ENCODE measurements at regions of chr11 and their contacts with region 1.

Region 1: GRCh38 chr11:102614485-102614884 is 10.6 kb downstream of the MMP20 start:
- DNase-seq: no peak
- ATAC-seq: no peak
- H3K4me3 Mint-ChIP-seq: no peak overlapping the region
- H3K27ac Mint-ChIP-seq: no peak overlapping the region
- H3K4me1 Mint-ChIP-seq: peaks cover 9% of the 10 kb centered on the region
- H3K27me3 Mint-ChIP-seq: no peaks in the 10 kb centered on the region

Region 2: DNA sequence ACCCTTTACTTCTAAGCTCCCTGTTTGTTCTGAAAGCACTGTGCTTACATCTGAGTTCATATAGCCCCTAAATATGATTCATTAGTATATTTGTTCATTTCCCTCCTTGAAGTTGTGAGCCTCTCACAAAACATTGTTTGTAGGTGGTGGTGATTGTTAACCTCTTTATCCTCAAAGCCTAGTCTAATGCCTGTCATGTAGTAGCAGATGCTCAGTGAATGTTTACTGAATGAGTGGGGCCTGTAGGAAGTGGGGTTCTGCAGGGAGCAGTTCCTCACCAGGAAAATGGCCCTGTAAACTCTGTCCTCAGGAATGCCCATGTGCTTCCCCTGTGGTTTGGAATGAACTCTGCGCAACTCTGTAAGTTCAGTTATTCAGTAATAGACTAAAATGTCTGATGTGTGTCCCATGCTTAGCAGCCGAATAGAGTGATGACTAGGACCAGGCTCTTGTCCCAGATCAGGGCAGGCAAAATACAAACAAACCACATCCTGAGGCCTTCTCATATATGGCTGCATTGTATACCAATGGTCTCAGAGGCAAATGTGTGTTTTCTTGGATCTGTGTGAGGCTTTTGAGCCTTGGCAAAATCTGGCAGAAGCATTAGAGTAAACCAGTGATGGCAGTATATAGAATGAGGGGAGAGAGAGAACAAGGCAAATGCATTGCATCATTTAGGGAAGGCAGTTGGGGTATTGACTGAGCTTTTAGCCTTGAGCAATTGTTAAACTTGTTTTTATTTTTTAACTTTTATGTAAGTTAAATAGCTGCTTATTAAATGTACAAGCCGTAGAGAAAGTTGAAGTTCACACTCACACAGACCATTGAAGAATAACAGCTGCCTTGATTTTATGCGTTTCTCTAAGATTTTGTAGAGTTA is 388.6 kb before region 1 on chr11:
- CTCF ChIA-PET with region 1: no interaction called
- POLR2A ChIA-PET with region 1: no interaction called
- DNase-seq: no peak
- ATAC-seq: no peak
- H3K4me3 Mint-ChIP-seq: no peak overlapping the region
- H3K27ac Mint-ChIP-seq: no peak overlapping the region
- H3K4me1 Mint-ChIP-seq: no peaks in the 10 kb centered on the region
- H3K27me3 Mint-ChIP-seq: peaks cover 5% of the 10 kb centered on the region

Region 3: GRCh38 chr11:102293873-102294601 is 320.4 kb before region 1 on chr11:
- CTCF ChIA-PET with region 1: interaction called, 41 read pairs
- POLR2A ChIA-PET with region 1: no interaction called
- DNase-seq: peak; percentile 51
- ATAC-seq: peak; percentile 91
- H3K4me3 Mint-ChIP-seq: peak overlapping the region; percentile 73
- H3K27ac Mint-ChIP-seq: peak overlapping the region; percentile 88
- H3K4me1 Mint-ChIP-seq: peaks cover 25% of the 10 kb centered on the region
- H3K27me3 Mint-ChIP-seq: no peaks in the 10 kb centered on the region

Region 4: GRCh38 chr11:102367364-102367763 is 247.1 kb before region 1 on chr11:
- CTCF ChIA-PET with region 1: interaction called, 59 read pairs
- POLR2A ChIA-PET with region 1: no interaction called
- DNase-seq: no peak
- ATAC-seq: peak; percentile 64
- H3K4me3 Mint-ChIP-seq: no peak overlapping the region
- H3K27ac Mint-ChIP-seq: peak overlapping the region; percentile 37
- H3K4me1 Mint-ChIP-seq: peaks cover 29% of the 10 kb centered on the region
- H3K27me3 Mint-ChIP-seq: no peaks in the 10 kb centered on the region

Region 5: DNA sequence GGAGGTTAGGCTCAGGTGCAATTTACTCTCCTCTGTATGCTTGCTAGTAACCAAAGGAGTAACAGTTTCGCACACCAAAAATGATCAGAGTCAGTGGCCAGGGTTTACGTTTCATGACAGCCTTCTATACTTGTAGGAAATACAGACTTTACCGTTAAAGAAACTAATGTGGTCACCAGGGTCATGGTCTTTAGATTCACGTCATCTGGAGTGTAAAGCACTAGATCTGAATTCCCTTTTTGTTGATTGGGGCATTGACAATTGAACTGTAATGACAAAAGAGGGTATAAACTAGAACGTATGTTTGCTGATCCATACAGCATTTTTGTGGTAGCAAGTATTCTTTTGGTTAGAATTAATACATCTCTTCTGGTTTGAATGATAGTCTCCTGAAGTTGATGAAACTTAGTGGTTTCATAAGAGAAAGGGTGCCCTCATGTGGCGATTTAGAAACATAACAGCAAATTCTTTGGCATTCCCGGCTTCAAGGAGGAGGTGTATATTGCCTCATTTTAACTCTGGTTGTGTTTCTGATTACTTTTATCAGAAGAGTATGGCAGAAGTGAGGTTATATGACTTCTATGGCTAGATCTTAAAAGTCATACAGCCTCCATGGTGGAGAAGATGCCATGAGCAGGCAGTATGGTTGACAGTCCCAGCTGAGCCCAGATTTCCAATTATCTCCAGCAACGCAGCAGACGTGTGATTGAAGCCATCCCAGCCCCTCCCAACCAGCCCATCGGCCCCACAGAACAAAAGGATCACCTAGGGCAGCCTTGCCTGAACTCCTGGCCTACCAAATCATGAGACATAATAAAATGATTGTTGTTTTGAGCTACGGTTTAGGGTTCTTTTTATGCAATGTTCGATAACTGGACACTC is 119.1 kb before region 1 on chr11:
- CTCF ChIA-PET with region 1: interaction called, 49 read pairs
- POLR2A ChIA-PET with region 1: interaction called, 3 read pairs
- DNase-seq: peak; percentile 68
- ATAC-seq: peak; percentile 78
- H3K4me3 Mint-ChIP-seq: no peak overlapping the region
- H3K27ac Mint-ChIP-seq: peak overlapping the region; percentile 9
- H3K4me1 Mint-ChIP-seq: peaks cover 27% of the 10 kb centered on the region
- H3K27me3 Mint-ChIP-seq: peaks cover 14% of the 10 kb centered on the region

Region 6: DNA sequence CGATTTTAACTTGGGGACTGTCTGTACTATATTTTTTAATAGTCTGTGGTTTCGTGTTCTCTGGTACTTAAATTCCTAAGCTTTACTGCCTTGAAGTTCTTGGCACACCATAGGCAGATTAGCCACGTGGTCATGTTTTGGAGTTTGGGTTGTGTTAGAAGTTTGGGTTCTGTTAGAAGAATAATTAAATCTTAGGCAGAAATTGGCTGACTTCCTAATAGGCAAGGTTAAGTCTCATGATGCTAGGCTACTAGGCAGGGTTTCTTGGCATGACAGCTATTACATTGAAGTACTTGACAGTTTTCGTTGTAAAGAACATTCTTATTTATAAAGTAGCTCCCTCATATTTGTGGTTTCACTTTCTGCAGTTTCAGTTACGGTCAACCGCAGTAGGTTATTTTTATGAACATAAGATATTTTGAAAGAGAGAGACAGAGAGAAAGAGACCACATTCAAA is 53.9 kb before region 1 on chr11:
- CTCF ChIA-PET with region 1: interaction called, 21 read pairs
- POLR2A ChIA-PET with region 1: no interaction called
- DNase-seq: peak; percentile 55
- ATAC-seq: peak; percentile 66
- H3K4me3 Mint-ChIP-seq: peak overlapping the region; percentile 58
- H3K27ac Mint-ChIP-seq: peak overlapping the region; percentile 87
- H3K4me1 Mint-ChIP-seq: peaks cover 50% of the 10 kb centered on the region
- H3K27me3 Mint-ChIP-seq: no peaks in the 10 kb centered on the region

Region 7: DNA sequence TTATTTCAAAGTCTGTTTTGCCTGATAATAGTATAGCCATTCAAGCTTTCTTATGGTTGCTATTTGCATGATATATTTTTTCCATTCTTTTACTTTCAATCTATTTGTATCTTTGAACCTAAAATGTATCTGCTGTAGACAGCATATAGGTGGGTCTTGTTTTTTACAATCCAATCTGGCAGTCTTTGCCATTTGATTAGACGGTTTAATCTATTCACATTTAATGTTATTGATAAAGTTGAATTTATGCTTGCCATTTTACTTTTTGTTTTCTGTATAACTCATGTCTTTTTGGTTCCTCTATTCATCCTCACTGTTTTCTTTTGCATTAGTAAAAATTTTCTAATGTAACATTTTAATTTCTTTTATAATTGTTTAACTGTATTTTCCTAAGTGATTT is 26.8 kb before region 1 on chr11:
- CTCF ChIA-PET with region 1: no interaction called
- POLR2A ChIA-PET with region 1: no interaction called
- DNase-seq: no peak
- ATAC-seq: no peak
- H3K4me3 Mint-ChIP-seq: no peak overlapping the region
- H3K27ac Mint-ChIP-seq: no peak overlapping the region
- H3K4me1 Mint-ChIP-seq: peaks cover 3% of the 10 kb centered on the region
- H3K27me3 Mint-ChIP-seq: peaks cover 3% of the 10 kb centered on the region

Region 8: DNA sequence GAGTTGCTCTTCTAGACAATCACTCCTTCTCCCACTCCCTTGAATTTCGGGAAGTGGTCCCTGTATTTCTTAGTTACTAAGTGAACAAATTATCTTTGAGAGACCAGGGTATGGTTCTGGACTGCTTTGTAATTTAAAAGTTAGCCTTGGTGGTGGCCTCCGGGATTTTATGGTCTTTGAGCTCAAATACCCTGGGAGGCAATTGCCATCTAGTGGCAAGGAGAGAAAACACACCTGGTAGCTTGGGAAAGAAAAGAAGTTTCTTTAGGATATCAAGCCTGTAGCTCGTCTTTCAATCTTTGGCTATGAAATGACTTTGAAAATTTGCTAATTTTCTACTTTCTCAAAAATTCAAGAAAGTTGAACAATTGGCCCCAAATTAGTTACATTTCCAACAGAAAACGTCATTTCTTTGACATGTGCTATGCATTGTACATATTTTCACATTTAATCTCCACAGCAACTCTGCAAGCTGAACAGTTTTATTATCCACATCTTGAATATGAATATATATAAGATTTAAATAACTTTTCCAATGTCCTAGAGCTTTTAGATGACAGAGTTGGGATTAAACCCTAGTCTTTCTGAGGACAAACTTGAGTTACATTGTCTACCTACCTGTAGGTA is 52.0 kb after region 1 on chr11:
- CTCF ChIA-PET with region 1: interaction called, 28 read pairs
- POLR2A ChIA-PET with region 1: no interaction called
- DNase-seq: peak; percentile 38
- ATAC-seq: peak; percentile 36
- H3K4me3 Mint-ChIP-seq: no peak overlapping the region
- H3K27ac Mint-ChIP-seq: no peak overlapping the region
- H3K4me1 Mint-ChIP-seq: no peaks in the 10 kb centered on the region
- H3K27me3 Mint-ChIP-seq: peaks cover 19% of the 10 kb centered on the region